IMR-90 (cell line): ENCODE measurements at regions of chr4 and their contacts with region 1.

Region 1: DNA sequence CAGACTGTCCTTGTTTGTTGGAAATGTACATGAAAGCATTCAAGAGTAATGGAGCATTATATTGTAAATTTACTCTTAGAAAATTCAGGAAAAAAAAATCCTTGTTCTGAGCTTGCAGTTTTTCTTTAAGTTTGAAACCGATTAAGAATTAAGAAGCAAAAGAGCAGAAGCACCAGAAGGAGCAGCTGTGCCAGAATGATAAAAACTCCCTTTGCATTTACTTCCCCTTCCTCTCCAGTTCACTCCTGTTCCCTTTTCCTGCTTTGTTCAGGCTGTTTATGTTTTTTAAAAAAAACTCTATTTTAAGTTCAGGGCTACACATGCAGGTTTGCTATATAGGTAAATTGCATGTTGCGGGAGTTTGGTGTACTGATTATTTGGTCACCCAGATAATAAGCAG is 90.3 kb downstream of the ATOH1 start:
- DNase-seq: no peak
- ATAC-seq: no peak
- H3K4me3 ChIP-seq: no peak overlapping the region
- H3K27ac ChIP-seq: no peak overlapping the region
- H3K4me1 ChIP-seq: no peaks in the 10 kb centered on the region
- H3K27me3 ChIP-seq: no peaks in the 10 kb centered on the region
- CTCF ChIP-seq: no peak
- POLR2A ChIP-seq: no peak
- RAD21 ChIP-seq: no peak

Region 2: GRCh38 chr4:94168321-94168720 is 249.5 kb after region 1 on chr4:
- CTCF ChIA-PET with region 1: no interaction called
- POLR2A ChIA-PET with region 1: interaction called, 10 read pairs
- dilution Hi-C with region 1: no loop called
- in situ Hi-C with region 1: no loop called
- intact Hi-C with region 1: no loop called
- DNase-seq: no peak
- ATAC-seq: peak; percentile 40; the same call in 1 of the 2 replicates
- H3K4me3 ChIP-seq: no peak overlapping the region
- H3K27ac ChIP-seq: no peak overlapping the region
- H3K4me1 ChIP-seq: no peaks in the 10 kb centered on the region
- H3K27me3 ChIP-seq: no peaks in the 10 kb centered on the region
- CTCF ChIP-seq: no peak
- POLR2A ChIP-seq: no peak
- RAD21 ChIP-seq: no peak

Region 3: GRCh38 chr4:94181815-94182214 is 263.0 kb after region 1 on chr4:
- CTCF ChIA-PET with region 1: no interaction called
- POLR2A ChIA-PET with region 1: no interaction called
- dilution Hi-C with region 1: no loop called
- in situ Hi-C with region 1: no loop called
- intact Hi-C with region 1: no loop called
- DNase-seq: no peak
- ATAC-seq: no peak
- H3K4me3 ChIP-seq: no peak overlapping the region
- H3K27ac ChIP-seq: no peak overlapping the region
- H3K4me1 ChIP-seq: no peaks in the 10 kb centered on the region
- H3K27me3 ChIP-seq: no peaks in the 10 kb centered on the region
- CTCF ChIP-seq: no peak
- POLR2A ChIP-seq: no peak
- RAD21 ChIP-seq: no peak